HepG2 (cell line): ENCODE measurements at regions of chr7 and their contacts with region 1.

Region 1: DNA sequence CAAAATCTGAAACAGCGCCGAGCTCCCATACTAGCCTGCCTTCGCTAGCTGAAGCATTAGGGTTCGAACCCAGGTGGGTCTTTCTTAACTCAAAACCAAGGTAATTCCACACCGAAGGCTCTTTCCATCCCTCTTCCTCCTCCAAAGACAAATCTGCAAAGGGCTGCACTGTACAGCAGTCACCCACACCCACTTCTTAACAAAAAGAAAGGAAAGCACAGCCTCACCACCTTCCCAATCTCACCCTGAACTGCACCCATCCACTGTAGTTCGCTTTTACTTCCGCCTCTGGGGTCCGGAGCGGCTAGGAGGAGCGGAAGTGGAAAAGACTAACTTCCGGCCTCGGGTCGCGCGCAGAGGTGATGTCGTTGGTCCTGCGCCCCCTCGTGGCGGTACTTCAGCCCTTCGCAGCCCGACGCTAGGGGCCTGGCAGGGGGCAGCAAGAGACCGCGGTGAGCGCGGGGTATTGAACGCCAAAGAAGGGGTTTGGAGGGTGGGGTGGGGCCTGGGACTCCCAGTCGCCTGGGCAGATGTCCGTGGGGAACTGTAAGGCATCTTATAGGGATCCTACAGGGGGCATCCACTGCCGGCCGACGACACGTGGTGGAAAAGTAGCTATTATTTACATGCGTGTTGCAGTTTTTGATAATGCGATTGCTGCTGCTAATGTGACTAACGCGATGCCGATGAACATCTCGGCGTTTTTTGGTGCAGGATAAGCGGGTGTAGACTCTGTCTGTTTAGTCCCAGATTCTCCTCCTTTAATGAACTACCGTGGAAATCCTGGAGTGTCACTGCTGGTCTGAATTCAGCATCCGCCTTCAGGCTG is at the start of gene MTERF1:
- DNase-seq: peak; percentile 86
- ATAC-seq: peak; percentile 98
- H3K4me3 ChIP-seq: peak within 1 kb of the TSS; percentile 82 to 89 (median 83)
- H3K27ac ChIP-seq: peak within 1 kb of the TSS; percentile 72
- H3K4me1 ChIP-seq: peaks cover 23% of the 10 kb centered on the region
- H3K27me3 ChIP-seq: peaks cover 0 to 5% of the 10 kb centered on the region in 2 experiments; a peak in 1 of 5 replicates
- CTCF ChIP-seq: peak; percentile 100
- EP300 ChIP-seq: peak in 1 of 2 experiments; percentile 16; a peak in 1 of 4 replicates
- POLR2A ChIP-seq: peak; percentile 88 to 90
- RAD21 ChIP-seq: peak; percentile 90
- total RNA-seq, gene MTERF1: 19.3 and 25.2 TPM in 2 replicates

Region 2: DNA sequence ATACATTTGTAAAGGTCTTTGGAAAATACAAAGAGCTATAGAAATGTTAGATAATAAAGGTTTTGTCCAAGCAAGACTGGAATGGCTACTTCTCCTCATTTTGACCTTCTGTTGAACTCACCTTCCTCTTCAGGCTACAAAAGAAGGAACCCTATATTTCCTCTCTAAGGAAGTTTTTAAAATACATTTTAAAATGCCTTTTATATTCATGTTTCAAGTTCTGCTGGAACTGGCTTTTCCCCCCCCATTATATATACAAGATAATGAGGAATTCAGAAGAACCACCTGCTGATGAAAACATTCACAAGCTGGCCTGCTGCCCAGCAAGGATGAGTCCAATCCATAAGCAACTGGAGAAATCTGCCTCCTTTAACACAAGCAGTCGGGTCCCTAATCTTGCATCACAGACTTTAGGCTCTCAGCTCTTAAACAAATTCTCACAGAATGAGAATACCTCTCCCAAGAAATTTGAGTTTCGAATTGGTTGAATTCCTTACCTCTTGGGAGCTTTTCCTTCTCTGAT is 44.7 kb before region 1 on chr7:
- CTCF ChIA-PET with region 1: no interaction called
- POLR2A ChIA-PET with region 1: no interaction called
- in situ Hi-C with region 1: no loop called
- intact Hi-C with region 1: loop called (anchors 2 kb)
- DNase-seq: no peak
- ATAC-seq: no peak
- H3K4me3 ChIP-seq: no peak overlapping the region
- H3K27ac ChIP-seq: no peak overlapping the region
- H3K4me1 ChIP-seq: no peaks in the 10 kb centered on the region
- H3K27me3 ChIP-seq: no peaks in the 10 kb centered on the region
- CTCF ChIP-seq: no peak
- EP300 ChIP-seq: no peak
- POLR2A ChIP-seq: no peak
- RAD21 ChIP-seq: no peak

Region 3: GRCh38 chr7:91847881-91848588 is 32.6 kb before region 1 on chr7:
- CTCF ChIA-PET with region 1: no interaction called
- POLR2A ChIA-PET with region 1: no interaction called
- in situ Hi-C with region 1: no loop called
- intact Hi-C with region 1: no loop called
- DNase-seq: no peak
- ATAC-seq: no peak
- H3K4me3 ChIP-seq: no peak overlapping the region
- H3K27ac ChIP-seq: no peak overlapping the region
- H3K4me1 ChIP-seq: peaks cover 9% of the 10 kb centered on the region
- H3K27me3 ChIP-seq: no peaks in the 10 kb centered on the region
- CTCF ChIP-seq: no peak
- EP300 ChIP-seq: no peak
- POLR2A ChIP-seq: no peak
- RAD21 ChIP-seq: no peak

Region 4: DNA sequence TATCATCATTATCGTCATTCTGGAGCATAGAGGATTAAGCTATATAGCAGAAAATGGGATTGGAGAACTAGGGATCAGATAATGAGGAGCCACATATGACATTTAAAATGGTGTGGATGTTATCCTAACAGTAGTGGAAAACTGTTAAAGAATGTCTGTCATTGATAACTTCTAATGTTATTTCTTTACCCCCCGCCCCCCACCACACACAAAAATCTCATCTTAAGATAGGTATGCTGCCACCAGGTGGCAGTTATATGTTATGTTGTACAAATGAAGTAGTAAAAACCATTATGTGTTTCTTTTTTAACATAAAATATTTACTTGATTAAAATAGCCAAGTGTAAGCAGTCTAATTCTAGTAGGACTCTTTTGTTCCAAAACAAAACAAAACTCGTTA is 73.0 kb after region 1 on chr7:
- CTCF ChIA-PET with region 1: interaction called, 12 read pairs
- POLR2A ChIA-PET with region 1: no interaction called
- in situ Hi-C with region 1: no loop called
- intact Hi-C with region 1: loop called (anchors 2 kb)
- DNase-seq: peak; percentile 10
- ATAC-seq: no peak
- H3K4me3 ChIP-seq: no peak overlapping the region
- H3K27ac ChIP-seq: no peak overlapping the region
- H3K4me1 ChIP-seq: peaks cover 10% of the 10 kb centered on the region
- H3K27me3 ChIP-seq: no peaks in the 10 kb centered on the region
- CTCF ChIP-seq: peak; percentile 21; the same call in 1 of the 2 replicates
- EP300 ChIP-seq: no peak
- POLR2A ChIP-seq: no peak
- RAD21 ChIP-seq: no peak

Region 5: DNA sequence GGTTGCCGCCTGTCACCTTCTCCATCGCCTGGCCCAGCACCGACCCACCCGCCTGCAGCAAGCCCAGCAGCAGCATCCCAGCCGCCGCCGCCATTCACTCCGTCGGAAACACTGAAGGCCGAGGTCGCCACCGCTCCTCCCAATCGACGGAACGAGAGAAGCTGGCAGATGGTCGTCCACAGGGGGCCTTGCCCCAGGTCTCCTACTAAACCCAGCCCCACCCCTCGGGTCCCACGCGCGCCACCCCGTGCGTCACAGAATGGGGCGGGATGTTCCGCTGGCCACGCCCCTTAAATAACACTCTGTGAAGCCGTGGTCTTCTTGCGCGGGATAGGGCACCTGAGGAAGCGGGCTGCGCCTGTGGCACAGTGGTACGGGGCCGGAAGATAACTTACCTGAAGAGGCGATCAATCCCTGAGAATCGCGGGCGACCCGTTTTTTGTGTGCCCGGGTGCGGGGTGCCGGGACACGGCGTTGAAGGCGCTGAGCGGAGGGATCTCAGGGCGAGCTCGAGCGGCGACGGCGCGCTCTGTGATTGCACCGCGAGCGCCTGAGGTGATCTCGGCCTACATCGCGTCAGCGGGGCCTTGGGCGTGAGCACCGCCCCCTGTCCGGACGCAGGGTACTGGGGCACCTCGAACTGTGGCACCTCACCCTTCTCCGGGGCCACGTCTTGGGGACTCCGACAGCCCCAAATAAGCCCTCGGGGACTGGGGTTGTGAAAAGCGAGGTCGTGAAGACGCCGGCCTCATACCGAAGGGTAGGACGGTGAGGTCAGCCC is 253.8 kb after region 1 on chr7 and contains the start of gene CYP51A1:
- CTCF ChIA-PET with region 1: no interaction called
- POLR2A ChIA-PET with region 1: no interaction called
- in situ Hi-C with region 1: no loop called
- intact Hi-C with region 1: loop called (anchors 5 kb)
- DNase-seq: peak; percentile 84
- ATAC-seq: peak; percentile 91
- H3K4me3 ChIP-seq: peak within 1 kb of the TSS; percentile 95 to 100 (median 98)
- H3K27ac ChIP-seq: peak within 1 kb of the TSS; percentile 98
- H3K4me1 ChIP-seq: peaks cover 47% of the 10 kb centered on the region
- H3K27me3 ChIP-seq: no peaks in the 10 kb centered on the region; a peak in 1 of 5 replicates
- CTCF ChIP-seq: peak; percentile 28; the same call in 1 of the 2 replicates
- EP300 ChIP-seq: no peak; a peak in 1 of 4 replicates
- POLR2A ChIP-seq: peak; percentile 84 to 93
- RAD21 ChIP-seq: peak; percentile 45; the same call in 1 of the 2 replicates
- total RNA-seq, gene CYP51A1: 194 and 260 TPM in 2 replicates